ENCODE measurements at regions of chr3 and their contacts with region 1.

Region 1: DNA sequence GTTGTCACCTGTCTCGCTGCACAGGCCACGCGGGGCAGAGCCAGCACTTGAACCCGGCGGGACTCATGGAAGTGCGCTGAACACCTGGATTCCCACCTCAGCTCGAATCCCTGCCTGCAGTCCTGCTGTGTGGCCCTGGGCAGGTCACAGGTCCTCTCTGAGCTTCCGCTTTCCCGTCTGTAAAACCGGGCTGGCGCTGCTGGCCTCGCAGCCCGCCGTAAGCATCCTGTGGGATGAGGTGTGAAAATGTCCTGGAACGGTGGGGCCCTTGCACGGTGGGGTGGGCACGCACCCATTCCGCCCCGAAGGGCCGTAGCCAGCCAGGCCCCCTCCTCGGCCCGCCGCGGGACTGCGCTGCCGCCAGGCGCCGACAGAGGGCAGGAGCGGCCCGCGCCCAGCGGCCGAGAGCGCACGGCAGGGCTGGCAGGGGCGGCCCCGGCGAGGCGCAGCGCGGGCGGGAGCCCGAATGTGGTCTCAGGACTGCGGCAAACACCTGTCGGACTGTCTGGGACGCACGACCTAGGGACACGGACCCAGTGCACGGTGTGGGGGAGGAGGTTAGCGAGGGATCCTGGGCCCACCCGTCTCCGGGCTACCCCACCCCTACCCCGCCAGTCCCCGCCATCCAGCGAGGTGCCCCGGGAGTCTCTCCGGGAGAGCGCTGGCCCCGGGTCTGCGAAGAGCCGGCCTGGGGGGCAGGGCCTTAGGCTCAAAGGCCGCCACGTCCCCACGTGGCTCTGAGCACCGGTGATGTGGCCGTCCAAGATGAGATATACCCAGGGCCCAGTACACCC is 40.4 kb downstream of the DNAJB8 start:
- DNase-seq: peak; percentile 86

Region 2: DNA sequence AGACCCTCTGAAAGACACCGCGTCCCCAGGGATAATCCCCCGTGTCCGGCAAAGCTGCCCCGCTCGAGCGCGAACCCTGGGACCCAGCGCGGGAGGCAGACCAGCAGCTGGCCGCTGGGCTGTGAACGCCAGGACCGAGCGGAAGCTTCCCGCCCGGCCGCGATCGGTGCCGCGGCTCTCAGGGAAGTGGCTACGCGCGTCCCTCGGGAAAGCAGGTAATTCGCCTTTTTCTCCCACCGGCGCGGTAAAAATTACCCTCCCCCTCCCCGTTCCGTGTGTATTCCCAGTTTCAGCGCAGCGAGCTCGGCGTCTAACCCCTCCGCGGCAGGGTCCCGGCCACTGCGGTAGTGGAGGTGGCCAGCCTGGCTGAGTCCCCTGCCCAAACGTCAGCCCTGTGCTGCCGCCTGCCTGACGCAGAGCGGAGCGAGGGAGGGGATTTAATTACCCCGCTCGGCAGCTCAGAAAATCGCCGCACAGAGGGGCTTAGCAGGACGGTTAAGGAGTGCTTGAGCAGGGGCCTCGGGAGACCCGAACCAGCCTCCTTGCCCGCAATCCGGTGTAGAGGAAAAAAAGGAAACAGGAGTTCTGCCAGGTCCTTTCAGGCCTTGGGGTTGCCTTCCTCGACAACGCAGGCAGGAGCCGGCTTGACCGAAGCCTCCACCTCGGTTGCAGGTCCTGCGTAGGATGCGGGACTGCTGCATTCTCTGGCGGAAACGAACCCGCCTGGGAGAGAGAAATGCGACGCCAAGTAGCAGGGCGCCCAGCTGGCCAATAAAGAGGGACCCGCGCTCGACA is 63.7 kb after region 1 on chr3:
- intact Hi-C with region 1: loop called (anchors 5 kb)
- DNase-seq: peak; percentile 81

Region 3: DNA sequence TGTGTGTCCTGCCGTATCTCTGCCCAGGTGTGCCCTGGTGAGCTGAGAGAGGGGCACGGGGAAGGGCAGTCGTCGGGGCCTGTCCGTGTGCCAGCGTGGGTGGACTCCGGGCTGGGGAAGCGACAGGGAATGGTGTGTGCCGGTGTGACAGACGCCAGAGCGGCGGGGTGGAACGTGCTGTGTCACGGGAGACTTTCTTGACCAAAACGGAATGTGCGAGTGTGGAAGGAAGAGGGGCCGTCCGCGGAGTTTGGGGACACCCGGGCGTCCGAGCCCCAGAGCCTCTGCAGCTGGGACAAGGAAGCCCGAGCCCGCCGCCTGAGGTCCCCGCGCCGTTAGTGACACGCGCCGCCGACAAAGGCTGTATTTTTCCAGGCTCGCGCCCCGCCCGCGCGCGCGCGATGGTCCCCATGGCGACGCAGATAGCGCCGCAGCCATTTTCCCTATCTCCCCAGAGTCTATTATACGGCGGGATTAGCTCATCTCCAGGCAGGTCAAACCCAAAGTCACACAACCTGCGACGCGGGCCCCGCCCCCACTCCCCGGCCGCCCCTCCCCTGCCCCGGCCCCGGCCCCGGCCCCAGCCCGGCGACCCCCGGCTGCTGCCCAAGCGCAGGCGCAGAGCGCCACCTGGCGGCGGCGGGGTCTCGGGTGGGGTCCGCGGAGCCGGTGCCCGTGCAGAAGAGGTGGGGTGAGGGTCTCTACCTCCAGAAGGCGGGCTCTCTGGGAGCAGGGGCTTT is 71.2 kb after region 1 on chr3:
- intact Hi-C with region 1: loop called (anchors 5 kb)
- DNase-seq: peak; percentile 87

Region 4: DNA sequence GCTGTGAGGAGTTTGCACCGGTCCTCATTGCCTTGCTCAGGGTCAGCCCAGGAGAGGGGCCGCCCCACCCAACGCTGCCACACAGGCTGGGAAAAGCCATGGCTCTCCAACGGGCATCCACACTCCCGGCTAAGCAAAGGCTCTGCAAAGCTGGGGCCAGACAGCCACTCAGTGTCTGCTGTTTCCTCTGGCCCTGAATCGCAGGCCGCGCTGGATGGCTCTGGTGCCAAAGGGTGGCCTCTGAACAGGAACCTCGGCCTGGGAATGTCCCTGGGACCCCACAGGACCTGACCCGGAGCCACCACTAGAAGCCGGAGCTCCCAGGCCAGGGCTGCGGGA is 181.4 kb after region 1 on chr3:
- intact Hi-C with region 1: loop called in 1 of 2 experiments (anchors 5 kb)
- DNase-seq: no peak

Region 5: GRCh38 chr3:128650096-128651050 is 224.0 kb after region 1 on chr3 and contains the start of gene RPN1:
- intact Hi-C with region 1: no loop called
- DNase-seq: peak; percentile 99
- total RNA-seq, gene RPN1: 144 to 155 TPM